Prostate gland (tissue), 2 donors: ENCODE measurements at regions of chr22 and their contacts with region 1.

Region 1: DNA sequence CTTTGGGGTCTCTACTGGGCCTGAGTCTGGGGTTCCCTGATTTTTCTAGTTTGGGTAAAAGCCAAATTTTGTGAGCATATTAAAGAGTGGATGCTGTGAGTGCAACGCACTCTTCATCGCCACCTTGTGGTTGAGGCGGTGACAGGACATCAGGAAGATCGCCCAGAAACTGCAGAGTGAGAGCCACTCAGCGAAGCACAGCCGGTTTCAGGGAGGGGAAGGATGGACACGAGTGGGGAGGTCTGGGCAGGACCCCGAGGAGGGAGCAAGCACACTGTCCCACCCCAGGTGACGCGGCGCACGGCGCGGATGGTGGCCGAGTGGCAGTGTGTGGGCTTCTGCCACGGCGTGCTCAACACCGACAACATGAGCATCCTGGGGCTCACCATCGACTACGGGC is 9.1 kb downstream of the SELENOO start:
- DNase-seq: peak; percentile 57
- H3K4me3 ChIP-seq: no peak overlapping the region
- H3K27ac ChIP-seq: no peak overlapping the region
- H3K4me1 ChIP-seq: no peaks in the 10 kb centered on the region
- H3K27me3 ChIP-seq: no peaks in the 10 kb centered on the region
- CTCF ChIP-seq: peak; percentile 66 to 88 (median 84)
- POLR2A ChIP-seq: no peak

Region 2: DNA sequence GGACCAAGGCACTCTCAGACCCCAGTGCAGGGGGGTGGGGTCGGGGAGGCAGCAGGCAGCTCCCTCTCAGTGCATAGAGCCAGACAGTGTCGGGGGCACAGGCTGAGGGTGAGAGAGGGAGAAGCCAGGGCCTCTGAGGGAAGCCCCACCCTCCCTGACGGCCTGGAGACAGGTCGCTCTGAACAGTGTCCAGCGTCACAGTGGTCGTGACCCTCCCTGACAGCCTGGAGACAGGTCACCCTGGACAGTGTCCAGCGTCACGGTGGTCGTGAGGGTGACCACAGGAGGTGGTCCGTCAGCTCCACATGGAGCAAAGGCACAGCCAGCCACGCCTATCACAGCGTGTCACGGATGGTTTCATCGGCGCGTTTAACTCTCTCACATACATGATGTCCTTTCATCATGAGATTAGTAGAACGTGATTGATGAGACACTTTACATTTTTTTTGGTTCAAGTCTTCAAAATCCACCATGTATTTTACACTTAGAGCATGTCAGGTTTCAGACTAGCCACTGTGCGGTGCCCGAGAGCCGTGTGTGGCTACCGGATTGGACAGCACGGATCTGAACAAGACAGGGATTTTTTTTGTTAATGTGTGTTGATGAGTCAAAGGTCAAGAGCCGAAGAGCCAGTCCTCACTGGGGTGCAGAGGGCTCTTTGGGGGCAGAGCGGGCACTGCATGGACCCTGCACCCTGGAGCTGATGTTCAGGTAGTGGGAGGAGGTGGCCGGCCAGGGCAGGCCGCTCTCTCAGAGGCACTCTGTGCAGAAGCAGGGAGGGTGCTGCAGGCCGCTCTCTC is 63.3 kb before region 1 on chr22:
- intact Hi-C with region 1: loop called (anchors 2 kb)
- DNase-seq: no peak
- H3K4me3 ChIP-seq: no peak overlapping the region
- H3K27ac ChIP-seq: no peak overlapping the region
- H3K4me1 ChIP-seq: peaks cover 8% of the 10 kb centered on the region
- H3K27me3 ChIP-seq: no peaks in the 10 kb centered on the region
- CTCF ChIP-seq: peak; percentile 16 to 80 (median 52)
- POLR2A ChIP-seq: no peak

Region 3: DNA sequence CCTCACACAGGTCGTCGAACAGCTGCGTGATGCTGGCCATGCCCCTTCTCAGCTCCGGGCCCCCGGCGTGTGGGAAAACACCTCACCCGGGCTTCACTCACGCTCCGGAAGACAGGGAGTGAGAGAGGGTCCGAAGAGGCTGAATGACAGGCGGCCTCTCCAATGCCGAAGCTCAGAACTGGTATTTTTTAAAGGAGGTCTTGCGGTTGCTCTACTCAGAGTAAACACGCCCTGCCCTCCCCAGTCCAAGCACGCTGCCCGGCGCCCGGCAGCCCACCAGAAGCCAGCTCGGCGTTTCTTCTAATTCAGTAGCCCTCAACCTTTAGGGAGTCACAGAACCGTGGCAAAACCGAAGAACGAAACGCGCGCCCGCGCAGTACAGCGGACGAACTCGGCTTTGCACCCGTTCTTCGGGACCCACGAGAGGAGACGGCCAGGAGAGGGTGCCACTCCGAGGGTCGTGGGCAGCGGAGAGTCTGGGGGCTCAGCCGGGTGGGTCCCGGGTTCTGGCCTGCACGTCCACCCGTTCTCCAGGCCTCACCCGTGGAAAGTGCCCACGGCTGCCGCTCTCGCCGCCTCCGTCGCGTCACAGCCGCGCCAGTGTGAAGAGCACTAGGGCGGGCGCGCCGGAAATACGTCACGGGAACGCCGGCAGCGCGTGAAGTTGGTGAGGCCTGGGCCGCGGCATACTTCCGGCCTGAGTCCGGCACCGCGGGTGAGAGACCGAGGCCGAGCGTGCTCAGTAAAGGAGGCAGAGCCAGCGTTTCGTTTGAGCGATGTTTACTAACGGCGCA is 34.7 kb after region 1 on chr22 and contains the start of gene TUBGCP6:
- intact Hi-C with region 1: no loop called
- DNase-seq: peak; percentile 96
- H3K4me3 ChIP-seq: peak within 1 kb of the TSS; percentile 80 to 95
- H3K27ac ChIP-seq: peak within 1 kb of the TSS; percentile 85 to 88
- H3K4me1 ChIP-seq: peaks cover 16% of the 10 kb centered on the region
- H3K27me3 ChIP-seq: no peaks in the 10 kb centered on the region
- CTCF ChIP-seq: peak in 3 of 4 experiments; percentile 11 to 49 (median 47)
- POLR2A ChIP-seq: peak; percentile 68
- total RNA-seq, gene TUBGCP6: 56.3 to 117 TPM